ENCODE measurements at regions of chr16 and their contacts with region 1.

Region 1: GRCh38 chr16:96935-97381 is 18.9 kb downstream of the MPG start:
- H3K4me3 ChIP-seq: no peak overlapping the region
- H3K27ac ChIP-seq: no peak overlapping the region
- H3K4me1 ChIP-seq: no peaks in the 10 kb centered on the region
- CTCF ChIP-seq: peak; percentile 99

Region 2: DNA sequence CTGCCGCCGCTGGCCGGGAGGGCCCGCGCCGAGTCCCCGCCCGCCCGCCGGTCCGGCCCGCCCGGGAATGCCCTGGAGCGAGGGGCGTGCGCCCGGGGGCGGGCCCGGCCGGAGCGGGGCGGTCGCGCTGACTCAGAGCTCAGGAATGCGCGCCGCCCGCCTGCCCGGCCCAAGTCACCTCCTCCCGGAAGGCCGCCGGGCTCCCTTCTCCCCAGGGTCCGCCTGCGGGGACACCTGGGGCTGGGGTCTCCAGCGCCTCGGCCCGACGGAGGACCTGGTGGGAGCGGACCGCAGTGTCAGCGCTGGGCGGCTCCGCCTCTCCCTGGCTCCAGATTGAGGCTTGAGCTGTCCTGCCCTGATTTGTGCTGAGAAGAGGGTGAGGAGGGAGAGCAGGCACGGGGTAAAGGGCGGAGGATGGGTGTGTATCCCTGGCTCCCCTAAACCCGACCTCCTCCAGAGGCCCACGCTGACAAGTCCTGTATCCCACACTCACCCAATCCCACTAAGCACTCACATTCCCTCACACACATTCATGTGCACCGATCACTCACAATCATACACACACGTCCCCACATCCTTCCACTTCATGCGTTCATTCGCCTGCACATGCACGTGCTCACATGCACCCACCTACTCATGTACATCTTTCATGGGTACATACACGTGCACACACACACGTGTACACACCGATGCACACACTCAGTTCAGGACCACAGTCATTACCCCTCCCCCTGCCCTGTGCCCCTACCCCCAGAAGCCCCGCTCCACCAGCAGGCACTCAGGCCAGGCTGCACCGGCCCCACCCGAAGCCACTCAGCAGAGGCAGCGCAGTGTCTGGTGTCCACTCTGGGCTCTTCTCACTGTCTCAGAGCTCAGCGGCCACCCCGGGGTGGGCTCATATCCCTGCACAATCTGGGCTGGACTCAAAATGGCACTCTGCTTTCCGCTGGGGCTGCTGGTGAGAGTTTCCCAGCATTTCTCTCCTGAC is 24.1 kb before region 1 on chr16 and contains the start of gene RHBDF1:
- CTCF ChIA-PET with region 1: interaction called, 245 read pairs
- POLR2A ChIA-PET with region 1: interaction called, 6 read pairs
- H3K4me3 ChIP-seq: peak within 1 kb of the TSS; percentile 51
- H3K27ac ChIP-seq: peak within 1 kb of the TSS; percentile 47
- H3K4me1 ChIP-seq: peaks cover 18% of the 10 kb centered on the region
- CTCF ChIP-seq: no peak

Region 3: GRCh38 chr16:77807-78443 is 19.0 kb before region 1 on chr16 and contains the start of gene MPG:
- CTCF ChIA-PET with region 1: interaction called, 14 read pairs
- POLR2A ChIA-PET with region 1: interaction called, 6 read pairs
- H3K4me3 ChIP-seq: peak within 1 kb of the TSS; percentile 53
- H3K27ac ChIP-seq: peak within 1 kb of the TSS; percentile 73; the same call in 1 of the 2 replicates
- H3K4me1 ChIP-seq: peaks cover 15% of the 10 kb centered on the region
- CTCF ChIP-seq: no peak

Region 4: DNA sequence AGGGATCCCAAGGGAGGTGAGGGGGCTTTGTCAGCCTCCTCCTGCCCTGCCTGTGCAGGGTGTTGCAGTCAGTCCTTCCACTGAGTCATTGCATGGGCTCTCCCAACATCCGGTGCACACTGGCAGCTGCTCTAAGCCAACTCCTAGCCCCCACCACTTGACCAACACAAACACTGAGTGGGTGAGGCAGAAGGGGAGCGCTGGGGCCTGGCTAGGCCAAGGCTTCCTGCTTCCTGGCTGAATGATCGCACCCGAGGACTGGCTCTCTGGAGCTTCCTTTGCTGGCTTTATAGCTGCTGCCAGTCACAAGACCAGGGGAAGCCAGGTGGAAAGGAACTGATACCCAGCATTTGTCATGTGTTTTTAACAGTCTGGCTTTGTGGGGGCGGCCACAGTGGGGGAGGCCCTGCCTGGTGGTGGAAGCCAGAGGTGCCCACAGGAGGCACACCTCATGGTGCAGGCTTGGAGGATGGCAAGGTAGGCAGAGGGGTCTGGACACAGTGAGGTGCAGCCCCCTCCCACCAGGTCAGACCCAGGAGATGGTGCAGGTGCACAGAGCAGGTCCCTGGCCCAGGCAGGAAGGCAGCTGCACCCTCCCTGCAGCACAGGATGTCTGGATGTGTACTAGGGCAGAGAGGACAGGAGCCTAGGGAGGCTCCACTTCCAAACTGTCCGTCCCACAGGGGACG is 12.1 kb before region 1 on chr16:
- CTCF ChIA-PET with region 1: interaction called, 25 read pairs
- POLR2A ChIA-PET with region 1: interaction called, 3 read pairs
- H3K4me3 ChIP-seq: no peak overlapping the region
- H3K27ac ChIP-seq: no peak overlapping the region
- H3K4me1 ChIP-seq: no peaks in the 10 kb centered on the region
- CTCF ChIP-seq: no peak

Region 5: GRCh38 chr16:180938-181667 is 84.1 kb after region 1 on chr16:
- CTCF ChIA-PET with region 1: interaction called, 11 read pairs
- POLR2A ChIA-PET with region 1: no interaction called
- H3K4me3 ChIP-seq: no peak overlapping the region; the same call in 1 of the 2 replicates
- H3K27ac ChIP-seq: peak overlapping the region; percentile 25; the same call in 1 of the 2 replicates
- H3K4me1 ChIP-seq: peaks cover 3% of the 10 kb centered on the region; the same call in 1 of the 2 replicates
- CTCF ChIP-seq: peak; percentile 96

Region 6: DNA sequence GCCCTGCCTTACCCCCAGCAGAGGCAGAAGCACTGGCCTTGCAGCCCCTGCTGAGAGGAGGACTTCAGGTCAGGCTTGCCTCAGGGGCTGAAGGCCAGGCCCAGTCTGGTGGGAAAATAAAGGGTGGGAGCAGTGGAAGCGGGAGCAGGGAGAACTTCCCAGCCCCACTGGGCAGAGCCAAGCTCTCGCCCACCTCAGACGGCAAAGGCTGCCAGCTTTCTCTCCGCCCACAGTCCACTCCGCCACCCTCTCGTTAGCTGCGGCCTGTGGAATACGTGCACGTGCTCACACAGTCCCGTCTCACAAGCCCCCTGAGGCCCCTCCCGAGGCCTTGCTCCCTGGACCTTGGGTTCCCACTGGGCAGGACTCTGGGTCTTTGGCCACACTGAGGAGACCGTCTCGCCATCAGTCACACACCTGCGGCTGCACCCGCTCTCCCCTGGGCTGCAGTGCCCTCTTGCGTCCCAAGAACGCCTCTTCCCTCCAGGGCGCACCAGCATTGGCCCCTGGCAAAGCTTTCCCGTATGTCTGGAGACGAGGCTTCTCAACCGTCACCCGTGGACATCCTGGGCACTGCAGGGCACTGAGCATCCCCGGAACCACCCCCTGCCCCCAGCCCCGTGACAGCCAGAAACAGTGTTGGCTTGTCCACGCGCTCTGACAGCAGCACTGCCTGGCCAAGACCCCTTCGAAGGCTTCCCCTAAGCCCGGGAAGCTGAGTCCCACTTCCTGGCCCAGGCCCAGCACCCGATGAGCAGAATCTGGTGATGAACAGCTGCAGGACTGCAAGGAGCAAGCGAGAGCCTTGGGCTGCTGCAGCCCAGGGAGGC is 265.1 kb after region 1 on chr16:
- CTCF ChIA-PET with region 1: interaction called, 19 read pairs
- POLR2A ChIA-PET with region 1: interaction called, 3 read pairs
- H3K4me3 ChIP-seq: no peak overlapping the region
- H3K27ac ChIP-seq: no peak overlapping the region
- H3K4me1 ChIP-seq: no peaks in the 10 kb centered on the region; the same call in 1 of the 2 replicates
- CTCF ChIP-seq: peak; percentile 95

Measured in HEK293 (cell line).